Psoas muscle (tissue), 8 donors: ENCODE measurements at regions of chr17 and their contacts with region 1.

Region 1: GRCh38 chr17:55356434-55357328 is 65.0 kb downstream of the MMD start:
- DNase-seq: peak in 1 of 2 donors; percentile 34
- ATAC-seq: peak; percentile 53 to 76 (median 66)
- H3K4me3 ChIP-seq: no peak overlapping the region
- H3K27ac ChIP-seq: no peak overlapping the region
- H3K4me1 ChIP-seq: no peaks in the 10 kb centered on the region
- H3K27me3 ChIP-seq: no peaks in the 10 kb centered on the region
- CTCF ChIP-seq: peak; percentile 67

Region 2: GRCh38 chr17:55413825-55414489 is 57.3 kb after region 1 on chr17:
- intact Hi-C with region 1: loop called in 1 of 2 experiments (anchors 2 kb)
- DNase-seq: no peak
- ATAC-seq: no peak
- H3K4me3 ChIP-seq: no peak overlapping the region
- H3K27ac ChIP-seq: no peak overlapping the region
- H3K4me1 ChIP-seq: peaks cover 20% of the 10 kb centered on the region
- H3K27me3 ChIP-seq: no peaks in the 10 kb centered on the region
- CTCF ChIP-seq: no peak

Region 3: GRCh38 chr17:55487695-55488429 is 131.2 kb after region 1 on chr17:
- intact Hi-C with region 1: no loop called
- DNase-seq: no peak
- ATAC-seq: no peak
- H3K4me3 ChIP-seq: no peak overlapping the region
- H3K27ac ChIP-seq: no peak overlapping the region
- H3K4me1 ChIP-seq: no peaks in the 10 kb centered on the region
- H3K27me3 ChIP-seq: no peaks in the 10 kb centered on the region
- CTCF ChIP-seq: no peak